HEK293T (cell line): ENCODE measurements at regions of chr3 and their contacts with region 1.

Region 1: GRCh38 chr3:190224863-190225692 is 97.2 kb downstream of the CLDN1 start:
- DNase-seq: peak; percentile 16

Region 2: GRCh38 chr3:190321789-190322603 is 96.9 kb after region 1 on chr3 and contains the start of gene CLDN1:
- CTCF ChIA-PET with region 1: interaction called, 13 read pairs
- POLR2A ChIA-PET with region 1: no interaction called
- DNase-seq: peak; percentile 78